GM13976 (cell line): ENCODE measurements at regions of chr10 and their contacts with region 1.

Region 1: DNA sequence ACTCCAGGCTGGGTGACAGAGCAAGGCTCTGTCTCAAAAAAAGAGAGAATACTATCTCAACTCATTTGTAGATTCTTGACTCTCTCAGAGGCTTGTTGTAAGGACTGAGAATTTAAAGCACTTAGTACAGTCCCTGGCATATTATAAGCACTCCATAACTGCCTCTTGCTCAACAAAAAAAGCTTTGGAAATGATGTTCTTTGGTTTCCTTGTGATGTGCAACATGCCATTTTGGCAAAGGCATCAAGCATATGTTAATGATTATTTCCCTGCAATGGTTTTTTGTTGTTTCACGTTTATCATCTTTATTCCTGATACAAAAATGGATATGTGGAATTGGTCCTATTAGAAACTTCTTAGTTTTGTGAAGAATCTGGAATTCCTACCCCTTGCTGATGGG is 15.7 kb downstream of the NOLC1 start:
- DNase-seq: no peak
- CTCF ChIP-seq: peak; percentile 3

Region 2: DNA sequence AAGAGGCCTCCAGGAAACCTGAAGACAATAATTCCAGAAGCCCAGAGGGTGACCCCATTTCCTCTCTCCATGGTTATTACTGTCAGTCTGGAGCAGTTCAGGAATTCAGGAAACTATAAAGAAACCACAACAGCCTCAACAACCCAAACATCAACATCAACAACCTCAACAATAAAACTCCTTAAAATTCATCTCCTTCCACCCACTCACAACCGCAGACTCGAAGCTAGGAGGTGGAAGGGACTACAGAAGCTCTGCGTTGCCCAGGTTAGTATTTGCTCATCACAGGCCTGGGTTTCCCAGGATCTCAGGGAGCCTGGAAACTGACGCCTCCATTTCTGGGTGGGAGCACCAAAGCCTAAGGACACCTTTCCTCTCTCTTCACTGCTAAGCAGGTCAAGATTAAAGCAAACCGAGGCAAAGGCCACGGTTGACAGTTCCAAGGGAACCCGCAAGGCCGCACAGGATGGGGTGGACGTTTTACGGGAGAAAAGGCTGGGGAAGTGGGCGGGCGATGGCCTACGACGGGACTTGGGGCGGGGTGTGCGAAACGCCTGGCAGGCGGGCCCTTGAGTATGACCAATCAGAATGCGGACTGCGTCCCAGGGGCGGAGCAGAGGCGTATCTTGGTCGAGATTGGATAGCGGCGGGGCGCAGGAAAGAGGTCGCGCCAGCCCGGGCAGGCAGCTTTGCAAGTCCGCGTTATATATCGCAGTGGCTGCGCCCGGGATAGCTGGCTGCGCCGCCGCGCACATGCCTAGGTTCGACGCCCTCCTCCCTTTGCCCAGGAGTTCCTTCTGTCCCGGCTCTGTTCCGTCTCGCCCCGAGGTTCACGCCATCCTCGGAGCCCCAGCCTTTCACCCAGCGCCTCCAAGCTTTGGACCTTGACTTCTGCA is 58.0 kb after region 1 on chr10 and contains the start of gene ELOVL3:
- in situ Hi-C with region 1: loop called (anchors 10 kb)
- DNase-seq: peak; percentile 96
- CTCF ChIP-seq: no peak